WTC11 (cell line): ENCODE measurements at regions of chr20 and their contacts with region 1.

Region 1: DNA sequence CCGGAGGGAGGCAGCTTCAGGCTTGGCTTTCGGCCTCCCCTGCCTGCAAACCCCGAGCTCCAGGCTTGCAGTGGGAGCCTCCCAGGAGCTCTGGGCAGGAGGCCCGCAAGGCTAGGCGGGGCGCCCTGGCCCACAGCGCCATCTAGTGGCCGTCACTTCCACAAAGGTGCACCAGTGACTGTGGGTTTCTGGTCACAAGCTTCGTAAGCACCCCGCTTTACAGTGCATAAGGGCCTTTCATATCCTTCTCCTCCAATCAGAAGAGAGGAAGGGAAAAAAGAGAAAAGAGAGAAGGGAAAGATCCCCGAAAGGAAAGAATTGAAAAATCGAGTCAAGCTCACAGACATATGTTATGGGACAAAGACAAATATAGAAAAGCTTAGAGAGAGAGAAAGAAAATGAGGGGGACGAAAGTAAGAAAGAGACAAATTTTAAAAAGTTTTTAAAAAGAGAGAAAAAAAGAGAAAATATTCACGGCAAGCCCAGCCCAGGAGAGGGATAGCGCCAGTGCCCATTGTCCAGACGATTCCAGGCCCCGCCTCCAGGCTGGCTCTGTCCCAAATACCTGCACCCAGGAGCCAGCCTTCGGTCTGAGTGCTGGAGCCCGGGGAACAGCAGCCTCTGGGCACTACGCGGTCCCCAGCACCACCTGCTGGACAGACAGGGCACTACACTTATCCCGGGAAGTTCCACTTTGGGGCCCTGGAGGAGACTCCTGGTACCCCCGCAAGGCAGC is 207.1 kb downstream of the PREX1 start:
- DNase-seq: peak; percentile 97
- ATAC-seq: peak; percentile 90
- H3K4me3 Mint-ChIP-seq: peak overlapping the region; percentile 73
- H3K27ac Mint-ChIP-seq: peak overlapping the region; percentile 50
- H3K4me1 Mint-ChIP-seq: peaks cover 8% of the 10 kb centered on the region; the same call in 1 of the 2 replicates
- H3K27me3 Mint-ChIP-seq: no peaks in the 10 kb centered on the region; the same call in 1 of the 2 replicates
- CTCF ChIP-seq: peak; percentile 84

Region 2: DNA sequence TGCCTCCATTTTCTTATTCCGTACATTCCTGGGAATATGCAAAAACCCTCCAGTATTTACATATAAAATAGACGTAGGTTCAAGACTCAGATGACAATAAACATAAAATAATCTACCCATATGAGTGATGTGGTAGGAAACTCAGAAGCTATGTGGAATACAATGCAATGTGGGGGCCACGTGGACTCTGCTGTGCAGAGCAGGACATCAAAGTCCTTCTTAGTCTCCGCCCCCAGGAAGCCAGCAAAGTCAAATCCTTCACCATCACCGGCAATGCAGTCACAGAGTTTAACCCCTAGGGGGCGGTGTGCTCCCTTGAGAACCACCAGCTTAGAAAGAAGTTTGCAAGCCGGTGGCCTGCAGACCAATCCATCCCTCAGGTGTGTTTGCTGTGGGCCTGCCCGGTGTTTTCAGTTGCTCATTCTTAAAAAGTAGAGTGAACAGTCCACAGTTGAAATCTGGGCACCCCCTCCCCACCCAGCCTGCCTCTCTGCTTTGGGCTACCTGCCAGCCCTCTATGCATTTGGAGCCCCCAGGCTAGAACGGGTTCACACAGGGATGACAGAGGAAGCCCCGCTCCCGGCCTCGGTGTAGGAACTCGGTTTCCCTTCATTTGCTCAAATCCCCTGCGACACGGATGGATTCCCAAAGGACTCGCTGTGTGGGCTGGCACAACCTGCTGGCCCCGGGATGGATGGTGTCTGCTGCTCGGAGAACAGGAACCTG is 895.3 kb before region 1 on chr20:
- CTCF ChIA-PET with region 1: interaction called, 12 read pairs
- POLR2A ChIA-PET with region 1: no interaction called
- DNase-seq: peak; percentile 79
- ATAC-seq: peak; percentile 84
- H3K4me3 Mint-ChIP-seq: no peak overlapping the region
- H3K27ac Mint-ChIP-seq: no peak overlapping the region
- H3K4me1 Mint-ChIP-seq: peaks cover 14% of the 10 kb centered on the region
- H3K27me3 Mint-ChIP-seq: no peaks in the 10 kb centered on the region
- CTCF ChIP-seq: peak; percentile 95

Region 3: GRCh38 chr20:48319960-48320584 is 300.6 kb before region 1 on chr20:
- CTCF ChIA-PET with region 1: interaction called, 10 read pairs
- POLR2A ChIA-PET with region 1: no interaction called
- DNase-seq: no peak
- ATAC-seq: no peak
- H3K4me3 Mint-ChIP-seq: no peak overlapping the region
- H3K27ac Mint-ChIP-seq: peak overlapping the region; percentile 82; the same call in 1 of the 2 replicates
- H3K4me1 Mint-ChIP-seq: peaks cover 18% of the 10 kb centered on the region
- H3K27me3 Mint-ChIP-seq: peaks cover 4% of the 10 kb centered on the region
- CTCF ChIP-seq: no peak

Region 4: DNA sequence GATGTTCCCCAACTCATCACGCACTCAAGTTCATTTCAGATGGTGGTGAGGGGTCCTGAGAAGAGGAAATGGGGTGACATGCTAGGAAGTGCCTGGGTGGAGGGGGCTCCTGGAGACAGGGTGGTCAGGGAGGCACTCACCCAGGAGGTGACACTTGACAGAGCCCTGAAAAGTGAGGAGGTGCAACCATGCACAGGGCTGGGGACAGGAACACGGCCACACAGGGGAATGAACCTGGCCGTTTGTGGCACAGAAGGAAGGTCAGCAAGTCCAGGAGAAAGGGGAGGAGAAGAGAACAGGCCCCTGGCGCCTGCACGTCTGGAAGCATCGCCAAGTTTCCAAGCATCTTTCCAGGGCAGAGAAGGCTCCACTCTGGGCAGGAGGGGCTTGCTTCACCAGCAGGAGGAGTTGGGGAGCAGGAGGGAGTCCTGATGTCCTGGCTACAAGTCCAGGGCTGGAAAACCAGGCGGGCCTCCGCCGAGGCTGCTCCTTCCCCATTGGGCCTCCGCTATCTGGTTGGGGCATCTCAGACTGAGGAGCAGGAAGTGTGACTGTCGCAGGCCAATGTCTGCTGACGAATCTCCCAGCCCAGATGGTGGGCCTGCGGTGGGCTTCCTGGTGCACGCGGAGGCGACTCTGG is 214.9 kb before region 1 on chr20:
- CTCF ChIA-PET with region 1: interaction called, 23 read pairs
- POLR2A ChIA-PET with region 1: no interaction called
- DNase-seq: peak; percentile 55
- ATAC-seq: peak; percentile 92
- H3K4me3 Mint-ChIP-seq: no peak overlapping the region
- H3K27ac Mint-ChIP-seq: no peak overlapping the region
- H3K4me1 Mint-ChIP-seq: peaks cover 25% of the 10 kb centered on the region
- H3K27me3 Mint-ChIP-seq: no peaks in the 10 kb centered on the region; the same call in none of the 2 replicates
- CTCF ChIP-seq: no peak

Region 5: GRCh38 chr20:48538420-48539203 is 82.1 kb before region 1 on chr20:
- CTCF ChIA-PET with region 1: interaction called, 26 read pairs
- POLR2A ChIA-PET with region 1: no interaction called
- DNase-seq: no peak
- ATAC-seq: peak; percentile 89
- H3K4me3 Mint-ChIP-seq: 0 out of 2 replicates have a peak overlapping the region, but pooled peaks have one; percentile 1
- H3K27ac Mint-ChIP-seq: peak overlapping the region; percentile 64
- H3K4me1 Mint-ChIP-seq: peaks cover 25% of the 10 kb centered on the region
- H3K27me3 Mint-ChIP-seq: no peaks in the 10 kb centered on the region
- CTCF ChIP-seq: no peak

Region 6: DNA sequence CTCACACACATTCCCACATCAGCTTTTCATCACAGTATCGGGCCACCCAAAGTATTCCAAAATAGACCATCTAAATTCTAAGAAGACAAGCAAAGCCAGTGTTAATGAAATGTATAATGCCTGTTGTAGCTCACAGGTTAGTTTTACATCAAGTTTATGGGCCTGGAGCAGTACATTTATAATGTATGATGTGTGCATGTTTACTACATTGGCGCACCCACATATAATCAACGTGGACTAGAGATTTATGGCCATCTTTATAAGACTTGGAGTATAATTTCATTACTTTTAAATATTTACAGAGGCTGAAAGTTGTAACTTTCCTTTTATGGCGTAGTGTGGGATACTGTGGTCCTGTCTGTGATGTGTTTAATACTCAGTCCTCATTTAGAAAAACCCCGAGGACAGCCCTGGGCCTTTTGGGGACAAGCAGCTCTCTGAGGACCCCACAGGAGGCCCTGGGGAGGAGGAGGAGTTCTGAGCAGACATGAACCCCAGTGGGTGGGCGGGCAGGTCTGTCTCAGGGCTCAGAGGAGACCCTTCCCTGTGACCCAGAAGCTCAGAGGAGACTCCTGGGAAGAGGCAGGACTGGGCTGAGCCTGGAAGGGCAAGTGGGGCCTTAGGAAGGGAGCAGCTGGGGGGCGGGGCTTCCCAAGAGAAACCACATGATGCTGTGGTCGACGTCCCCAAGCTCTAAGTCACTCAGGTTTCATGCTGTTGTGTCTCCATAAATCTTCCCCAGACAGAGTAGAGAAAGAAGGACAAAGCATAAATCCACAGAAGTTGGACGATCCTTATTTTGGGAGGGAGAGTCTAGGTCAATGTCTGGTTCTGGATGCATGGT is 25.0 kb before region 1 on chr20:
- CTCF ChIA-PET with region 1: interaction called, 15 read pairs
- POLR2A ChIA-PET with region 1: no interaction called
- DNase-seq: no peak
- ATAC-seq: no peak
- H3K4me3 Mint-ChIP-seq: no peak overlapping the region
- H3K27ac Mint-ChIP-seq: no peak overlapping the region
- H3K4me1 Mint-ChIP-seq: peaks cover 9% of the 10 kb centered on the region
- H3K27me3 Mint-ChIP-seq: no peaks in the 10 kb centered on the region
- CTCF ChIP-seq: no peak

Region 7: GRCh38 chr20:48717095-48717672 is 96.5 kb after region 1 on chr20:
- CTCF ChIA-PET with region 1: no interaction called
- POLR2A ChIA-PET with region 1: no interaction called
- DNase-seq: no peak
- ATAC-seq: no peak
- H3K4me3 Mint-ChIP-seq: no peak overlapping the region
- H3K27ac Mint-ChIP-seq: no peak overlapping the region
- H3K4me1 Mint-ChIP-seq: peaks cover 1% of the 10 kb centered on the region
- H3K27me3 Mint-ChIP-seq: no peaks in the 10 kb centered on the region
- CTCF ChIP-seq: no peak